ENCODE measurements at regions of chr3 and their contacts with region 1.

Region 1: DNA sequence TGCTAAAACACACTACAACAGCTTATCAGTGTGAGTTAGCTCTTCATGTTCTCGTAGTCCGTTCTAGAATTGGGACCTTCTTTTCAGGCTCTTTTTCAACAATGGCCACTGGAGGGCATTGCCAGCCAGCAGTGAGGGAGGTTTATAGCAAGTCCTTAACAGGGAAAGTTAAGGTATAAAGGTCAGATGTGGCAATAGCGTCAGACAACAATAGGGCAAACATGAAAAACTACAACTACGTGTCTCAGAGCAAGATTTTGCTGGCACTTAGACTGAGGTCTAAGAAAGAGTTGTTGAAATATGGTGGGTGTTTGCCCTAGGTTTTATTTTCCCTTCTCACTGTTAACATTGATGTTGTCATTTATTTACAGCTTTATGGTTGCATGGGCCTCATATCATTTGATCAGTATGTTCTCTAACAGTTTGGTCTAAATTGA is 161.4 kb downstream of the GMNC start:
- DNase-seq: no peak
- ATAC-seq: peak; percentile 67 to 81

Region 2: DNA sequence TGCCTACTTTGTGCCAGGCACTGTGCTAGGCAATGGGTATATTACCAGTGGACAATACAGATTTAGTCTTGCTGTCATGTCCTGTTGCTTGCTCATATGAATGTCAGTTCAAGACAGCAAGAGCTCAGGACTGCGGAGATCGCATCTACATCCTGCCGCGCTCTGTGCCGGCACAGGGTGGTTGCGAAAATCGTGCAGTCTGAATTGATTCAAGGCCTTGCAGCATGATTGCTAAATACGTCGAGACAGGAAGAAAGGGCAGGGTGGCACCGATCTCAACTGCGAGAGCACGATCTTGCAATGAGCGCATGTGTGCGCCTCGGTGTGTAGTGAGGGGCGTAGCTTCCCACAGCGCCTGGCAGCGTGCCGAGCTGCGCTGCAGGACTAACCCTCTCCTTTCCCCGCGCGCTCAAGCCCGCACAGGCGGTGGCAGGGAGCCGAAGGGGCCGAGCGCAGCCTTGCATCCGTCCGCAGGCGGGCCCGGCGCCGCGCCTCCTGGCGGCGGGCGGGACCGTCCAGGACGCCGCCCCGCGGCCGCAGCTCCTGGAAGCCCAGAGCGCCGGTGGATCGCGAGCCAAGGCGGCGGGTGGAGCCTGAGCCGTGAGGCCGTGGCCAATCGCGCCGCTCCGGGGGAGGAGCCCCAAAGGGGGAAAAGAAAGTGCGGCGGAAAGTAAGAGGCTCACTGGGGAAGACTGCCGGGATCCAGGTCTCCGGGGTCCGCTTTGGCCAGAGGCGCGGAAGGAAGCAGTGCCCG is 187.5 kb before region 1 on chr3 and contains the start of gene IL1RAP:
- intact Hi-C with region 1: loop called in 1 of 2 experiments (anchors 2 kb)
- DNase-seq: peak; percentile 94
- ATAC-seq: peak; percentile 99
- total RNA-seq, gene IL1RAP: 7.1 to 14.7 TPM

Region 3: DNA sequence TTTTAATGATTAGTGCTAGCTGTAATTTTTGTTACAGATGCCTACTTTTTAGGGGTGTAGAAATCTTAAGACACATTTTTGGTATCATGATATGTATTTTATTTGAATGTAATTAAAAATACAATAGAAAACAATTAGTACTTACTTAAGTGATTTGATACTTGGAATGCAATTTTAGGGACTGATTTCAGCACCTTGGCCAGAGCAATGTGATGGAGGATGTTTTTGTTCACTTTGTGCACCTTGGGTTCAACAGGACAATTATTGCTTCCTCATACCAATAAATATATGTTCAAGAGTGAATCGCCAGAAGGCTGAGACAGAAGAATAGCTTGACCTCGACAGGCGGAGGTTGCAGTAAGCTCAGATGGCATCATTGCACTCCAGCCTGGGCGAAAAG is 139.0 kb after region 1 on chr3:
- intact Hi-C with region 1: no loop called
- DNase-seq: no peak
- ATAC-seq: no peak

Region 4: DNA sequence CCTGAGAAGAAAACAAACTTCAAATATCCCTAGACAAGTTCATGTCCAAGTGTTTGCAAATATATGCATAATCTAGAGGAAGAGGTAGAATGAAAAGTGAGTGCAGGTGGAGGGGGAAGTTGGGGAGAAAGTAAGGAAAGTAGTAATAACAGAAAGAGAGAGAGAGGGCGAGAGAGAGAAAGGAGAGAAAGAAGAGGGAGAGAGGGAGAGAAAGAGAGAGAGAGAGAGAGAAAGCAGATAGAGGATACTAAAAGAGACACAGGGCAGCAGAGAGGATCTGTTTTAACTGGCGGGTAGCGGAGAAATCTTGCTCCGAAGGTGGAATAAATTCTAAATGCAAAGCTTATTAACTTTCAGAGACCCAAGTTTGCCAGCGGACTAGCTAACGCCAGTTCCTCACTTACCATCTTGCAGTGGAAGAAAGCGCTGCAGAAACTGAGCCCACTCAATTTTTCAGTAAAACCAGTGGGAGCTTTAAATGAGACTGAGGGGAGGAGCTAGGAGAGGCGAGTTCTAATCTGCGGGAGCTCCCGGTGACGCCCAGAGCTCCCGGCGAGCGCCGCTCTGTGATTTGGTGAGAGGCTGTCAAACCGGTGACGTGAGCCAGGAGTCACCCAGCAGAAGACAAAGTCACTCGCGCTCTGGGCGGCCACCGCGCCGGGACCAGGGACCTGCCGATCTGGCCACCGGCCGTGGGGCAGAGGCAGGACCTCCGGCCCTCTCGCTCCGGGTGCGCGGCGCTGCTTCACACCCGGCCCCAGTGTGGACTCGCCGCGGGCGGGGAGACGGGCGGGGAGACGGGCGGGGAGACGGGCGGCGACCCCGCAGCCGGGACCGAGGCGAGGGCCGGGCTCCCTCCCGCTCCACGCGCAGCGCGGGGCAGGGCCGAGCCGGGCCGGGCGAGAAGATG is 161.3 kb after region 1 on chr3 and contains the start of gene GMNC:
- intact Hi-C with region 1: loop called in 1 of 2 experiments (anchors 10 kb)
- DNase-seq: peak; percentile 90
- ATAC-seq: peak; percentile 96 to 99
- total RNA-seq, gene GMNC: 0.32 to 0.34 TPM

Region 5: GRCh38 chr3:191051037-191051436 is 349.9 kb after region 1 on chr3:
- intact Hi-C with region 1: loop called in 1 of 2 experiments (anchors 2 kb)
- DNase-seq: no peak
- ATAC-seq: no peak